HepG2 (cell line): ENCODE measurements at regions of chr1 and their contacts with region 1.

Region 1: DNA sequence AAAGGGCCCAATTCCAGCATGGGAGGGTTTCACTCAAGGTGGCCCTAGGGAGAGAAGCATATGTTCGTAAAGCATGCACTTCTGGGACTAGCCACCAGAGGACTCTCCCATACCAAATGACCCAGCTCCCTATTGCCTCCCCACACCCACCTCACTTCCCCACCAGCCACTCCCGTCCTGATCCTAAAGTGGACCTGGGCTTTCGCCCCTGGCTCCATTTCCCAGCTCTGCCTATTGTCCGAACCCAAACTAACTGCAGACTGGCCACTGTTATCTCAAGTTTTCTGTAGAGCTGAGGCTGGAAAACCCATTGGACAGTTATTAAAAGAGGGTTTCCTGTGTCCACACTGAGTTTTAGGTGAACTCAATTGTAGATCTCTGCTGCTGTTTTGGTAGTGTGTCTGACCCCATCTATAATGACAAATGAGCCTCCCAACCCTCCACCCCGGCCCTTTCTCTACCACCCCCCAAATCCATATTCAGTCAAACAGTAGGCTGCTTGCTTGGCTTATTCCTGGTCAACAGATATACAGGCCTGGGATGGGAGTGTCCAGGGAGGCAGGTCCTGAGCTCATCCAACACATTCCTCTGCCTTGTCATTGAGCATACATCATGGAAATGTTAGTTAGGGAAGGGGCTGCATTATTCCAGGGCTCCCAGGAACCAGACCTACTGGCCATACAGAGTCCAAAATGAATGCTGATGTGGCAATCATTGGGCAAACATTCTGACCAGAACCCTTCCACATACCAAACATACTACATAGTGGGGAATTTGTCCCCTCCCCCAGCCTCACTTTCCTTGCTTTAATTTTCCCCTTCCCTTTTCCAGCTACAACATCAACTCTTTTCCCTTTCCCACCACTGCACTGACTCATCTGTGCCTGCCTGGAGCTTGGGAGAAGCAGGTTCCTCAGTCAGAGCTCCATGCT is 59.2 kb downstream of the ABCA4 start:
- DNase-seq: peak; percentile 97
- ATAC-seq: peak; percentile 91
- H3K4me3 ChIP-seq: peak overlapping the region; percentile 14 to 58 (median 52); a peak in 5 of 6 replicates
- H3K27ac ChIP-seq: peak overlapping the region; percentile 63
- H3K4me1 ChIP-seq: peaks cover 57% of the 10 kb centered on the region
- H3K27me3 ChIP-seq: no peaks in the 10 kb centered on the region
- CTCF ChIP-seq: peak; percentile 95
- EP300 ChIP-seq: peak in 1 of 2 experiments; percentile 56; a peak in 1 of 4 replicates
- POLR2A ChIP-seq: no peak
- RAD21 ChIP-seq: peak; percentile 96

Region 2: GRCh38 chr1:94105432-94105952 is 43.7 kb after region 1 on chr1:
- CTCF ChIA-PET with region 1: no interaction called
- POLR2A ChIA-PET with region 1: no interaction called
- in situ Hi-C with region 1: no loop called
- intact Hi-C with region 1: no loop called
- DNase-seq: no peak
- ATAC-seq: no peak
- H3K4me3 ChIP-seq: no peak overlapping the region
- H3K27ac ChIP-seq: no peak overlapping the region
- H3K4me1 ChIP-seq: peaks cover 39% of the 10 kb centered on the region
- H3K27me3 ChIP-seq: peaks cover 2 to 29% of the 10 kb centered on the region in 2 experiments; a peak in 4 of 5 replicates
- CTCF ChIP-seq: no peak
- EP300 ChIP-seq: no peak
- POLR2A ChIP-seq: no peak
- RAD21 ChIP-seq: no peak

Region 3: DNA sequence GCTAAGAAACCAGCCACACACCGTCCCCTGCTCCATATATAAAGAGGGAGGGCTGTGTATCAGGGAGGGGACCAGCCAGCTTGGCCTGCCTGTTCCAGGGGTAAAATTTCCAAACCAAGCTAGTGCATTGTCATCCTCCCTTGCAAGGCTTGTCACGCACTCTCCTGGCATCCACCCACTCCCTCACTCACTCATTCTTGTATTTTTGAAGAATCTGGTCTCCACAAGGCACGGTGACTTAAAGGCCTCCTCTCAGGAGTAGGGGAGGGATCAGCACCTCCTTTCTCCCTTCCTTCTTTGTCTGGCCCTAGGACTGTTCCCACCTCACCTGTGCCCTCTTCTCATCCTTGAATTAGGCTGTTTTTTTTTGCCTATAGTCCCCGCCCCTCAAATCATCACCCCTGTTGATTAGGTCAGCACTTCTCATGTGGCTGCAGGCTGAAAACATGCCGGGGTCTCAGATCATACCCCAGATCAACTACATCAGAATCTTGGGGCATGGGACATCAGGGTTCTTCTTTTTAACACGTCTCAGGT is 54.2 kb after region 1 on chr1:
- CTCF ChIA-PET with region 1: no interaction called
- POLR2A ChIA-PET with region 1: interaction called, 3 read pairs
- in situ Hi-C with region 1: no loop called
- intact Hi-C with region 1: loop called (anchors 5 kb)
- DNase-seq: no peak
- ATAC-seq: peak; percentile 37
- H3K4me3 ChIP-seq: peak overlapping the region in 1 of 3 experiments; percentile 25; a peak in 1 of 6 replicates
- H3K27ac ChIP-seq: peak overlapping the region; percentile 65
- H3K4me1 ChIP-seq: peaks cover 91% of the 10 kb centered on the region
- H3K27me3 ChIP-seq: peaks cover 2 to 12% of the 10 kb centered on the region in 2 experiments; a peak in 2 of 5 replicates
- CTCF ChIP-seq: no peak
- EP300 ChIP-seq: no peak
- POLR2A ChIP-seq: no peak
- RAD21 ChIP-seq: no peak

Region 4: GRCh38 chr1:94125551-94126514 is 64.1 kb after region 1 on chr1:
- CTCF ChIA-PET with region 1: no interaction called
- POLR2A ChIA-PET with region 1: interaction called, 11 read pairs
- in situ Hi-C with region 1: no loop called
- intact Hi-C with region 1: no loop called
- DNase-seq: peak; percentile 96
- ATAC-seq: peak; percentile 97
- H3K4me3 ChIP-seq: peak overlapping the region; percentile 23 to 40 (median 25); a peak in 5 of 6 replicates
- H3K27ac ChIP-seq: peak overlapping the region; percentile 78
- H3K4me1 ChIP-seq: peaks cover 54% of the 10 kb centered on the region
- H3K27me3 ChIP-seq: no peaks in the 10 kb centered on the region
- CTCF ChIP-seq: peak; percentile 31; the same call in 1 of the 2 replicates
- EP300 ChIP-seq: peak in 1 of 2 experiments; percentile 90; a peak in 3 of 4 replicates
- POLR2A ChIP-seq: peak; percentile 30 to 48; a peak in 2 of 4 replicates
- RAD21 ChIP-seq: no peak